Common myeloid progenitor, CD34-positive (primary cell): ENCODE measurements at regions of chrX and their contacts with region 1.

Region 1: GRCh38 chrX:56281789-56282188 is 49.6 kb downstream of the KLF8 start:
- DNase-seq: peak; percentile 17 to 53 (median 38)
- H3K4me3 ChIP-seq: no peak overlapping the region
- H3K27ac ChIP-seq: no peak overlapping the region
- H3K4me1 ChIP-seq: no peaks in the 10 kb centered on the region
- H3K27me3 ChIP-seq: peaks cover 0 to 6% (median 0%) of the 10 kb centered on the region in 5 experiments

Region 2: DNA sequence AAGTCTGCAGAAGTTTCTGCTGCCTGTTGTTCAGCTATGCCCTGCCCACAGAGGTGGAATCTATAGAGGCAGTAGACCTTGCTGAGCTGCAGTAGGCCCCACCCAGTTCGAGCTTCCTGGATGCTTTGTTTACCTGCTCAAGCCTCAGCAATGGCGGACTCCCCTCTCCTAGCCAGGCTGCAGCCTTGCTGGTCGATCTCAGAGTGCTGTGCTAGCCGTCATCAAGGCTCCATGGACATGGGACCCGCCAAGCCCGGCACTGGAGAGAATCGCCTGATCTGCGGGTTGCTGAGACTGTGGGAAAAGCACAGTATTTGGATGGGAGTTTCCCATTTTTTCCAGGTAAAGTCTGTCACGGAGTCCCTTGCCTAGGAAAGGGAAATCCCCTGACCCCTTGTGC is 174.5 kb before region 1 on chrX:
- CTCF ChIA-PET with region 1: no interaction called
- POLR2A ChIA-PET with region 1: no interaction called
- DNase-seq: no peak
- H3K4me3 ChIP-seq: no peak overlapping the region
- H3K27ac ChIP-seq: no peak overlapping the region
- H3K4me1 ChIP-seq: no peaks in the 10 kb centered on the region
- H3K27me3 ChIP-seq: no peaks in the 10 kb centered on the region

Region 3: DNA sequence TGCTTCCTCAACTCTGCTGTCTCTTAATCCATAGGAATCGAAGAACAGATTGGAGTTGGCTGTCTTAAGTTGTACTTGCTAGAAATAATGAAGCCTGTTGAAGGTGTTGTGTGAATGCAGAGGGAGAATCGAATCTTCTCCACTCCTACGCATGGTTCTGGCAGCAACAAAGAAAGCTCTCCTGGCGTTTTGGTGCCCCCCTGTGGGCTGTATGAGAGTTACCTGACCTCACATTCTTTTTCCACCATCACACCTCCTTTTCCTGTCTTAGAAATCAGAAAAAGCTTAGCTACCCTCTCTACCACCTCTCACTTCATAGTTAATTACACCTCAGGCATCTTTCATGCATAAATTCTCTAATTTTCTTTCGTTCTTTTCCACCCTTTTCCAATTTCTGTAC is 33.3 kb before region 1 on chrX:
- CTCF ChIA-PET with region 1: no interaction called
- POLR2A ChIA-PET with region 1: no interaction called
- DNase-seq: peak; percentile 34 to 74 (median 66)
- H3K4me3 ChIP-seq: no peak overlapping the region
- H3K27ac ChIP-seq: no peak overlapping the region
- H3K4me1 ChIP-seq: peaks cover 0 to 2% (median 0%) of the 10 kb centered on the region in 4 experiments
- H3K27me3 ChIP-seq: no peaks in the 10 kb centered on the region

Region 4: GRCh38 chrX:56366901-56367300 is 85.1 kb after region 1 on chrX:
- CTCF ChIA-PET with region 1: no interaction called
- POLR2A ChIA-PET with region 1: no interaction called
- DNase-seq: no peak
- H3K4me3 ChIP-seq: no peak overlapping the region
- H3K27ac ChIP-seq: no peak overlapping the region
- H3K4me1 ChIP-seq: peaks cover 0 to 5% (median 0%) of the 10 kb centered on the region in 4 experiments
- H3K27me3 ChIP-seq: no peaks in the 10 kb centered on the region

Region 5: DNA sequence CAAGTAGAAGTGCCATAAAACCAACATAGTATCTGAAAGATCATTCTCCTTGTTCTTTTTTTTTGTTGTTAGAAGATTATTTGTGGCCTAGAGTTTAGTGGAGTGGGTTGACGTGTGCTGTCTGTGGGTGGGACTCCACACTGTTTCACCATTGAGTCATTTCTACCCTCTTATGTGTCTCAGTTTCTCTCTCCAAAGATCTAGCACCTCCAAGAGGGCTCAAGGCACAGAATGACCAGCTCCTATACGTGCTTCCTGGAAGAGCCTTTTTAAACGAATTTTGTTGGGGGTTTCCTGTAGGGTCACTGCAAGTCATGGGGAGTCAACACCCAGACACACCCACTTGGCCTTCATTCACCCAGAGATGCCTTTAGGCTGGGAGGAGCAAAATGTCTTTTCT is 100.5 kb after region 1 on chrX:
- CTCF ChIA-PET with region 1: no interaction called
- POLR2A ChIA-PET with region 1: no interaction called
- DNase-seq: no peak
- H3K4me3 ChIP-seq: no peak overlapping the region
- H3K27ac ChIP-seq: no peak overlapping the region
- H3K4me1 ChIP-seq: no peaks in the 10 kb centered on the region
- H3K27me3 ChIP-seq: no peaks in the 10 kb centered on the region

Region 6: GRCh38 chrX:56729152-56729850 is 447.5 kb after region 1 on chrX and contains the start of gene NBDY:
- CTCF ChIA-PET with region 1: interaction called, 52 read pairs
- POLR2A ChIA-PET with region 1: no interaction called
- DNase-seq: peak; percentile 40 to 64 (median 55)
- H3K4me3 ChIP-seq: peak within 1 kb of the TSS; percentile 49 to 91 (median 80)
- H3K27ac ChIP-seq: peak within 1 kb of the TSS; percentile 84 to 92
- H3K4me1 ChIP-seq: peaks cover 0 to 17% (median 1%) of the 10 kb centered on the region in 4 experiments
- H3K27me3 ChIP-seq: peaks cover 0 to 9% (median 0%) of the 10 kb centered on the region in 5 experiments